ENCODE measurements at regions of chr1 and their contacts with region 1.

Region 1: DNA sequence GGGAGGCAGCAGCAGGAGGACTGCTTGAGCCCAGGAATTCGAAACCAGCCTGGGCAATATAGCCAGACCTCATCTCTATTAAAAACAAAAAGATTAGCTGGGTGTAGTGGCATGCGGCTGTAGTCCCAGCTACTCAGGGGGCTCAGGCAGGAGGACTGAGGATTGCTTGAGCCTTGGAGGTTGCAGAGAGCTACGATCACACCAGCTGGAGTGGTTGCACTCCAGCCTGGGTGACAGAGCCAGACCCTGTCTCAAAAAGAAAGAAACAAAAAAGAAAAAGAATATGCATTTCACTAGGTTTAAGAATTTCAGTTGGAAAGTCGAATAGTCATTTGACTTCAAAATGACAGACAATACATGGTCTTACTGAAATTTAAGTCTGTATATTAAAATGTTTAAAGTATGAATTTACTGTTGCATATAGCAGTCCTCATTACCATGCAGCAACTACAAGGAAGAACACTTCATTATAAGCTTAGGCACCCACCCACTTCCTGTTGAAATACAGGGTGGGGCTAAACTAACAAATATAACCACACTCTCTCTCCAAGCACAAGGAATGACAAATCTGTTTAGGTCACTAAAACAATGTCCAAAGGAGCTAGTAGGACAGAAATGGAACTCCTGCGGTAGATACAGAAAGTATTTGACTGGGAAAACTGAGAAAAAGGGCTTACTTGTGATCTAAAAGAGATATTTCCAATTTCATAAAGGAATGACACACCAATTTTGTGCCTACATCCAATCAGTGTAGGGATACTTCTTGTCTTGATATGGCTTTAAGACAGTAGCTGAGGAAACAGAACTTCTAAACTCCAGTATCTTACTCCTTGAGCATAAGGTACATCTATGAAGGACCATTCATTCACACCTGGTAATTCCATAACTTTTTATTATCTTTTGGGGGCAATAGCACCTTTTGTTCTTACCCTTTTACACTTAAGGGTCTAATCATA is 44.1 kb downstream of the GPR3 start:
- DNase-seq: peak in 2 of 3 donors; percentile 55 to 72
- H3K4me3 ChIP-seq: peak overlapping the region in 2 of 7 experiments; percentile 10 to 26
- H3K27ac ChIP-seq: peak overlapping the region in 1 of 2 experiments; percentile 56
- H3K4me1 ChIP-seq: peaks cover 49 to 80% (median 69%) of the 10 kb centered on the region in 4 experiments
- H3K27me3 ChIP-seq: no peaks in the 10 kb centered on the region

Region 2: DNA sequence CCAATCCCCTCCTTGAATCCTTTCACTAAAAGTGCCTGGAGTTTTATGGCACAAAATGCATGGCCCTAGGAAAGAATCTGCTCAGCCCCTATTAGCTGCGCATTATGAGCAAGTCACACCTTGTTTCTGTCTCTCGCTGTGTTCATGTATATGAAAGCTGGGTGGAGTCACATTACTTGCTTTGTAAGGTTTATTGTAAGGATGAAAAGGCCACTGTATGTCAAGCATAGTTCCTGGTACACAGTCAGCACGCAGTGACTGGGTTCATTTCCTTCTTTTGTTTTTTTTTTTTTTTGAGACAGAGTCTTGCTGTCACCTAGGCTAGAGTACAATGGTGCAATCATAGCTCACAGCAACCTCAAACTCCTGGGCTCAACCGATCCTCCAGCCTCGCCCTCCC is 274.9 kb before region 1 on chr1:
- CTCF ChIA-PET with region 1: no interaction called
- POLR2A ChIA-PET with region 1: no interaction called
- DNase-seq: peak in 1 of 3 donors; percentile 15
- H3K4me3 ChIP-seq: no peak overlapping the region
- H3K27ac ChIP-seq: no peak overlapping the region
- H3K4me1 ChIP-seq: peaks cover 0 to 6% (median 1%) of the 10 kb centered on the region in 4 experiments
- H3K27me3 ChIP-seq: no peaks in the 10 kb centered on the region

Region 3: DNA sequence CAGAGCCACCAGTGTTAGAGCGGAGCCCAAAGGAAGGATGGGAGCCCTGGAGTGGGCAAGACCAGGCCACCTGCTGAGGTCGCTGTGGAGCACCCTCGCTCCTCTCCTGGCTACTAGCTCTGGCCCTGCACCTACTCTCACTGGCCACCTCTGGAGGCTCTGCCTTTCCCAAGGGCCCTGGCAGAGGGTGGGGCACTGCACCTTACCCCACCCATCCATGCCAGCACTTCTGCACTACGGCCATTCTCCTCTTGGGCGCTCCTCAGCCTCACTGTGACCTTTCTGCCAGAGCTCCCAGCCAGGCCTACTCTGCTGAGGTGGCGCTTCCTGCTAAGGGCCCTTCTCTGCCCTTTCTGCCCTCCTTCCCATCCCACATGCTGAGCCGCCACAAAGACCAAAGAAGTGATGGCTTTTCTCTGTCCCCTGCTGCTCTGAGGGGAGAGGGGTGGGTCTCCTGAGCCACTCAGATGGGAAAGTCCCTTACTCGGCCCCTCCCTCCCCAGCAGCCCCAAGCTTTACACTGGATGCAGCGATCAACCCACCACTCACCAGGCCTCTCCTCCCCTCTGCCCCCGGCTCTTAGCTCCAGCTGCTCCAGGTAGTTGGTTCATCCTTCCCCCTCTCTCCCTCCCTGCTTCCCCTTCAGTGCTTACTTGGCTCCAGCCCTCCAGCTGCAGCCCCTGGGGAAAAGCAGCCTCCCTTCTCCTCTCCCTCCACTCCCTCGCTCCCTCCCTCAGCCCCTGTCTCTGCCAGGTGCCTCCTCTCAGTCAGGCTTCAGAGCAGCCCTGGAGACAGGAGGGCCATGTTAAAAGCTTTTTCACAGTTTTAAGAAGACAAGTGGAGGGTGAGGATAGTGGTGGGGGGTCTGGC is 129.4 kb before region 1 on chr1:
- CTCF ChIA-PET with region 1: no interaction called
- POLR2A ChIA-PET with region 1: no interaction called
- DNase-seq: no peak
- H3K4me3 ChIP-seq: no peak overlapping the region
- H3K27ac ChIP-seq: no peak overlapping the region
- H3K4me1 ChIP-seq: no peaks in the 10 kb centered on the region
- H3K27me3 ChIP-seq: no peaks in the 10 kb centered on the region

Region 4: DNA sequence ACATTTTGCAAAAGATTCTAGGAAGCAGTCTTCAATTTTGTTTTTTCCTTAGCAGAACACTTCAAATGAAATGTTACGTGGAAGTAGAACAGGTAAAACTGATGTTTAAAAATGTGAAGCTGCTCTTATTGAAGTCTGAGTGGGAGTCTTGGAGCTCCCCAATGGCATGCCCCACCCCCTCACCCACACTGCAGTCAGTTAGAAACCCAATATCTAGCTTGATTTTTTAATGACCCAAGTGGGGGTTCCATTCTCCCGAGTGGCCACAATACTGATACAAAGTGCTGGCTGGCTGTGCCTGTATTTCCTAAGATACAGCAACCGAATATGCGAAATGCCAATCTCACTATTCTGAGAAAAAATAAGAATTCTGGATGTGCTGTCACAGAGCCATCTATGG is 12.8 kb before region 1 on chr1:
- CTCF ChIA-PET with region 1: interaction called, 119 read pairs
- POLR2A ChIA-PET with region 1: interaction called, 6 read pairs
- DNase-seq: no peak
- H3K4me3 ChIP-seq: no peak overlapping the region
- H3K27ac ChIP-seq: peak overlapping the region in 1 of 2 experiments; percentile 39
- H3K4me1 ChIP-seq: peaks cover 19 to 70% (median 54%) of the 10 kb centered on the region in 4 experiments
- H3K27me3 ChIP-seq: no peaks in the 10 kb centered on the region

Region 5: DNA sequence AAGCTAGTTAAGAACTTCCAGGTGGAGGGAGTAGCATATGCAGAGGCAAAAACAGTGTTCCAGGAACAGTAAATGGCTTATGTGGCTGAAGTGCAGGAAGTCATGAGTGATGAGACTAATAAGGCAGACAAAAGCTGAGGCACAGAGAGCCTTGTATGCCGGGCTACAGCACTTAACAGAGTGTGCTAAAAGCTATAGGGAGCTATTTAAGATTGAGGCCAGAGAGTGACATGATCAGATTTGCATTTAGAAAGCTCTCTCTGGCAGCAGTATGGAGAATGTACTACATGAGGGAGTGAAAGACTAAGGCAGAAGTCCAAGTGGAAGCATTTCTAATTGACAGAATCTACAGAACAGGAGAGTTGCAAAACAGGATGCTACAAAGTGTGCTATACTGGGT is 14.9 kb after region 1 on chr1:
- CTCF ChIA-PET with region 1: interaction called, 19 read pairs
- POLR2A ChIA-PET with region 1: interaction called, 3 read pairs
- DNase-seq: no peak
- H3K4me3 ChIP-seq: no peak overlapping the region
- H3K27ac ChIP-seq: no peak overlapping the region
- H3K4me1 ChIP-seq: peaks cover 7 to 21% (median 15%) of the 10 kb centered on the region in 4 experiments
- H3K27me3 ChIP-seq: no peaks in the 10 kb centered on the region